ENCODE measurements at regions of chr15 and their contacts with region 1.

Region 1: GRCh38 chr15:58770857-58771620 is at the start of gene MINDY2:
- DNase-seq: peak; percentile 94 to 99 (median 97)
- H3K4me3 ChIP-seq: peak within 1 kb of the TSS; percentile 75 to 92 (median 92)
- H3K4me3 Mint-ChIP-seq: peak within 1 kb of the TSS; percentile 94 to 95
- H3K27ac ChIP-seq: peak within 1 kb of the TSS; percentile 93
- H3K27ac Mint-ChIP-seq: peak within 1 kb of the TSS; percentile 81 to 95 (median 92)
- H3K4me1 ChIP-seq: peaks cover 26 to 34% of the 10 kb centered on the region in 2 donors
- H3K4me1 Mint-ChIP-seq: peaks cover 7% of the 10 kb centered on the region
- H3K27me3 ChIP-seq: no peaks in the 10 kb centered on the region
- H3K27me3 Mint-ChIP-seq: peaks cover 0 to 2% (median 0%) of the 10 kb centered on the region in 3 donors
- CTCF ChIP-seq: peak; percentile 48
- polyA plus RNA-seq, gene MINDY2: 3.4 to 10.9 (median 3.4) TPM

Region 2: GRCh38 chr15:58247855-58248766 is 522.9 kb before region 1 on chr15:
- intact Hi-C with region 1: loop called in 1 of 2 experiments (anchors 10 kb)
- DNase-seq: peak; percentile 96 to 99 (median 97)
- H3K4me3 ChIP-seq: peak overlapping the region in 1 of 3 experiments; percentile 49
- H3K4me3 Mint-ChIP-seq: peak overlapping the region; percentile 47 to 76
- H3K27ac ChIP-seq: peak overlapping the region; percentile 92 to 97
- H3K27ac Mint-ChIP-seq: peak overlapping the region; percentile 89 to 97 (median 95)
- H3K4me1 ChIP-seq: peaks cover 79 to 85% of the 10 kb centered on the region in 2 donors
- H3K4me1 Mint-ChIP-seq: peaks cover 96% of the 10 kb centered on the region
- H3K27me3 ChIP-seq: no peaks in the 10 kb centered on the region
- H3K27me3 Mint-ChIP-seq: peaks cover 0 to 4% (median 0%) of the 10 kb centered on the region in 3 donors
- CTCF ChIP-seq: no peak

Region 3: GRCh38 chr15:59553879-59554735 is 783.1 kb after region 1 on chr15:
- intact Hi-C with region 1: no loop called
- DNase-seq: no peak
- H3K4me3 ChIP-seq: no peak overlapping the region
- H3K4me3 Mint-ChIP-seq: no peak overlapping the region
- H3K27ac ChIP-seq: no peak overlapping the region
- H3K27ac Mint-ChIP-seq: no peak overlapping the region
- H3K4me1 ChIP-seq: peaks cover 16 to 19% of the 10 kb centered on the region in 2 donors
- H3K4me1 Mint-ChIP-seq: peaks cover 24% of the 10 kb centered on the region
- H3K27me3 ChIP-seq: no peaks in the 10 kb centered on the region
- H3K27me3 Mint-ChIP-seq: peaks cover 0 to 2% (median under 1%) of the 10 kb centered on the region in 3 donors
- CTCF ChIP-seq: no peak

Measured in CD14-positive monocyte (primary cell).